ENCODE measurements at regions of chr3 and their contacts with region 1.

Region 1: GRCh38 chr3:192108820-192109219 is 618.5 kb downstream of the FGF12 start:
- DNase-seq: no peak
- ATAC-seq: peak; percentile 34; the same call in 1 of the 3 replicates
- H3K4me3 ChIP-seq: no peak overlapping the region
- H3K27ac ChIP-seq: no peak overlapping the region
- H3K4me1 ChIP-seq: no peaks in the 10 kb centered on the region
- H3K27me3 ChIP-seq: no peaks in the 10 kb centered on the region
- CTCF ChIP-seq: no peak
- EP300 ChIP-seq: no peak
- POLR2A ChIP-seq: no peak
- RAD21 ChIP-seq: no peak

Region 2: DNA sequence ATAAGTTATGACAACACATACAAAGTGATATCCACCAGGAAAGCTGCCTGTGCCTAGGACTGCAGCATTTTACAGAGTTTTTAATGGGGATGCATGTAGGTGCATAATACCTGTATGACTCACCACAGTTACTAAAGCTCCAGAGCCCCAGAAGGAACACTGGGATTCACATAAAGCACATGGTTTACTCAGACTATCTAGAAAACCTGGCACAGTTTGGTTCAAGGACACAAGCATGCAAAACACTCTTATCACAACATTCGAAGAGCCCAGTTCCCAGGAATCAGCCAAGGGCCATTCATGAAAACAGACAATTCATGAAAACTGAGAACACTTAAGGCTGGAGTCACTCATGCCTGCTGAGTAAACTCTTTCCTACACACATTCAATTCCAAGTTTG is 386.8 kb before region 1 on chr3:
- CTCF ChIA-PET with region 1: no interaction called
- POLR2A ChIA-PET with region 1: no interaction called
- RAD21 ChIA-PET with region 1: no interaction called
- SMC1A ChIA-PET with region 1: no interaction called
- in situ Hi-C with region 1: no loop called
- intact Hi-C with region 1: no loop called
- DNase-seq: no peak
- ATAC-seq: no peak
- H3K4me3 ChIP-seq: no peak overlapping the region
- H3K27ac ChIP-seq: no peak overlapping the region
- H3K4me1 ChIP-seq: no peaks in the 10 kb centered on the region
- H3K27me3 ChIP-seq: no peaks in the 10 kb centered on the region
- CTCF ChIP-seq: no peak
- EP300 ChIP-seq: no peak
- POLR2A ChIP-seq: no peak
- RAD21 ChIP-seq: no peak

Region 3: GRCh38 chr3:192130534-192131132 is 21.8 kb after region 1 on chr3:
- CTCF ChIA-PET with region 1: interaction called, 11 read pairs
- POLR2A ChIA-PET with region 1: no interaction called
- RAD21 ChIA-PET with region 1: interaction called, 3 read pairs
- SMC1A ChIA-PET with region 1: interaction called, 3 read pairs
- in situ Hi-C with region 1: no loop called
- intact Hi-C with region 1: no loop called
- DNase-seq: peak; percentile 13
- ATAC-seq: peak; percentile 76
- H3K4me3 ChIP-seq: no peak overlapping the region
- H3K27ac ChIP-seq: no peak overlapping the region
- H3K4me1 ChIP-seq: no peaks in the 10 kb centered on the region; the same call in 1 of the 2 replicates
- H3K27me3 ChIP-seq: no peaks in the 10 kb centered on the region
- CTCF ChIP-seq: peak; percentile 54 to 76 (median 63)
- EP300 ChIP-seq: no peak
- POLR2A ChIP-seq: no peak
- RAD21 ChIP-seq: peak; percentile 44

Measured in GM12878 (cell line).